ENCODE measurements at regions of chr1 and their contacts with region 1.

Region 1: GRCh38 chr1:207282058-207282457 is 39.4 kb upstream of the CD55 start:
- DNase-seq: no peak

Region 2: GRCh38 chr1:207205614-207206061 is 76.4 kb before region 1 on chr1:
- intact Hi-C with region 1: loop called (anchors 2 kb)
- DNase-seq: no peak

Region 3: DNA sequence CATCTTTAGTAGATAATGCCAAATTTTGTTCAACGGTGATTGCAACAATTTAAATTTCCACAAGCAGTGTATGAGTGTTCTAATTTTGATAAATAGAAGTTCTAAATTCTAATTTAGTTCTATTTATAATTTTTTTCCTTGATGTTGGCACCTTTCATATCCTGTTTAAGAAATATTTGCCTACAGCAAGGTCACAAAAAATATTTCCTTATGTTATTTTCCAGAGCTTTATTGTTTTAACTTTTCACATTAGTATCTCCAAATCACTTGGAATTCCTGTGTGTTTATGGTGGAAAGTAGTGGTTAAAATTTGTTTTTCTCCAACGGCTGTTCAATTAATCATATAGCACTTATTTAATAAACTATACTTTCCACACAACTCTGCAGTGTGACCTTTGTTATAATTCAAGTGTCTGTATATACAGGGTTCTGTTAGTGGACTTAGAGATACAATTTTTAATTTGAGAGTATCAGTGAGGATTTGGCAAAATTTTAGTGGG is 54.9 kb before region 1 on chr1:
- intact Hi-C with region 1: no loop called
- DNase-seq: no peak

Measured in cardiac septum (tissue), 1 donor.